Ovary (tissue), 10 donors: ENCODE measurements at regions of chr13 and their contacts with region 1.

Region 1: DNA sequence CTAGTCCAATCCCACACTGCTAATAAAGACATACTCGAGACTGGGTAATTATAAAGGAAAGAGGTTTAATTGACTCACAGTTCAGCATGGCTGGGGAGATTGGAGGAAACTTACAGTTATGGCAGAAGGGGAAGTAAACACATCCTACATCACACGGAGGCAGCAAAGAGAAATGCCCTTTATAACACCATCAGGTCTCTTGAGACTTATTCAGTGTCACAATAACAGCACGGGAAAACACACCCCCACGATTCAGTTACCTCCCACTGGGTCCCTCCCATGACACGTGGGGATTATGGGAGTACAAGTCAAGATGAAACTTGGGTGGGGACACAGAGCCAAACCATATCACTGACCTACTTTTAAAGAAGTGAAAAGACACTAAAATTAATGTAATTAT is 1130.4 kb upstream of the SLC10A2 start:
- DNase-seq: no peak
- H3K4me3 ChIP-seq: no peak overlapping the region
- H3K27ac ChIP-seq: no peak overlapping the region
- H3K4me1 ChIP-seq: no peaks in the 10 kb centered on the region
- H3K27me3 ChIP-seq: no peaks in the 10 kb centered on the region
- CTCF ChIP-seq: no peak
- EP300 ChIP-seq: no peak
- POLR2A ChIP-seq: no peak

Region 2: GRCh38 chr13:104143760-104144416 is 52.7 kb before region 1 on chr13:
- intact Hi-C with region 1: loop called in 1 of 4 experiments (anchors 2 kb)
- DNase-seq: no peak
- H3K4me3 ChIP-seq: no peak overlapping the region
- H3K27ac ChIP-seq: no peak overlapping the region
- H3K4me1 ChIP-seq: no peaks in the 10 kb centered on the region
- H3K27me3 ChIP-seq: no peaks in the 10 kb centered on the region
- CTCF ChIP-seq: no peak
- EP300 ChIP-seq: no peak
- POLR2A ChIP-seq: no peak